HCT116 (cell line): ENCODE measurements at regions of chr11 and their contacts with region 1.

Region 1: GRCh38 chr11:70191495-70192140 is 11.5 kb upstream of the FADD start:
- DNase-seq: peak; percentile 62
- ATAC-seq: peak; percentile 95
- H3K4me3 ChIP-seq: no peak overlapping the region
- H3K27ac ChIP-seq: no peak overlapping the region
- H3K4me1 ChIP-seq: peaks cover 0 to 15% of the 10 kb centered on the region in 2 experiments; a peak in 2 of 4 replicates
- H3K27me3 ChIP-seq: no peaks in the 10 kb centered on the region
- CTCF ChIP-seq: peak; percentile 93 to 98 (median 95)
- POLR2A ChIP-seq: no peak
- RAD21 ChIP-seq: peak; percentile 100

Region 2: GRCh38 chr11:69588270-69588669 is 603.3 kb before region 1 on chr11:
- CTCF ChIA-PET with region 1: no interaction called
- POLR2A ChIA-PET with region 1: no interaction called
- RAD21 ChIA-PET with region 1: no interaction called
- intact Hi-C with region 1: no loop called
- DNase-seq: peak; percentile 54
- ATAC-seq: peak; percentile 96
- H3K4me3 ChIP-seq: no peak overlapping the region
- H3K27ac ChIP-seq: no peak overlapping the region
- H3K4me1 ChIP-seq: peaks cover 0 to 20% of the 10 kb centered on the region in 2 experiments; a peak in 2 of 4 replicates
- H3K27me3 ChIP-seq: no peaks in the 10 kb centered on the region
- CTCF ChIP-seq: peak in 2 of 3 experiments; percentile 60 to 63; a peak in 4 of 6 replicates
- POLR2A ChIP-seq: no peak
- RAD21 ChIP-seq: peak; percentile 42; the same call in 1 of the 2 replicates

Region 3: DNA sequence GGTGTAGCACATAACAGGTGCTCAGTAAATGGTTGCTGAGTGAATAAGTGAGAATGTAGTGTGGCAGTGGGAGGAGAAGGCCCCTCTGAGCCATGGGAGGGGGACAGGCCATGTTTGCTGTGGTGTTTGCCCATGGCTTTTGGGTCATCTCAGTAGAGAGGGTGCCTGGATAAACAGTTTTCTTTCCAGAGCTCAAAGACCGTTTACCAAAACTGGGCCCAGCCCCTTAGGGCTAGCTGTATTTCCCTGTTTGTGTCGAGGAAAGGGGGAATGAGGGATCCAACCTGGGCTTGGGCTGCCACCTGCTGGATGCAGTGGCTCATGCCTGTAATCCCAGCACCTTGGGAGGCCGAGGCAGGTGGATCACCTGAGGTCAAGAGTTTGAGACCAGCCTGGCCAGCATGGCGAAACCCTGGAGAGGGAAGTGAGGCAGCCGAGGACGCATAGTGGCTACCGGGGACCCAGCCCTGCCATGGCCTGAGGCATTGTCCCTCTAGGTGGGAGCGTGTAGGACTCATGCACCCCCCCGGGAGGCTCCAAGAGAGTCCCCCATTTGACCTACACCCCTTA is 507.8 kb before region 1 on chr11:
- CTCF ChIA-PET with region 1: interaction called, 6 read pairs
- POLR2A ChIA-PET with region 1: no interaction called
- RAD21 ChIA-PET with region 1: interaction called in 1 of 2 experiments, 3 read pairs
- intact Hi-C with region 1: loop called (anchors 5 kb)
- DNase-seq: no peak
- ATAC-seq: peak; percentile 78
- H3K4me3 ChIP-seq: no peak overlapping the region
- H3K27ac ChIP-seq: no peak overlapping the region
- H3K4me1 ChIP-seq: peaks cover 11 to 45% of the 10 kb centered on the region in 2 experiments; a peak in 3 of 4 replicates
- H3K27me3 ChIP-seq: no peaks in the 10 kb centered on the region
- CTCF ChIP-seq: peak; percentile 56 to 73 (median 71); a peak in 5 of 6 replicates
- POLR2A ChIP-seq: no peak
- RAD21 ChIP-seq: peak; percentile 92

Region 4: GRCh38 chr11:69718147-69718546 is 473.5 kb before region 1 on chr11:
- CTCF ChIA-PET with region 1: no interaction called
- POLR2A ChIA-PET with region 1: no interaction called
- RAD21 ChIA-PET with region 1: no interaction called
- intact Hi-C with region 1: loop called (anchors 5 kb)
- DNase-seq: no peak
- ATAC-seq: peak; percentile 83
- H3K4me3 ChIP-seq: no peak overlapping the region
- H3K27ac ChIP-seq: no peak overlapping the region
- H3K4me1 ChIP-seq: peaks cover 7 to 19% of the 10 kb centered on the region in 2 experiments; a peak in 3 of 4 replicates
- H3K27me3 ChIP-seq: no peaks in the 10 kb centered on the region
- CTCF ChIP-seq: peak; percentile 72 to 81 (median 78)
- POLR2A ChIP-seq: no peak
- RAD21 ChIP-seq: peak; percentile 73

Region 5: GRCh38 chr11:69909561-69910496 is 281.8 kb before region 1 on chr11:
- CTCF ChIA-PET with region 1: interaction called, 20 read pairs
- POLR2A ChIA-PET with region 1: interaction called, 3 read pairs
- RAD21 ChIA-PET with region 1: interaction called, 6 to 8 read pairs
- intact Hi-C with region 1: loop called (anchors 1 kb)
- DNase-seq: no peak
- ATAC-seq: peak; percentile 47
- H3K4me3 ChIP-seq: no peak overlapping the region
- H3K27ac ChIP-seq: no peak overlapping the region
- H3K4me1 ChIP-seq: peaks cover 19 to 58% of the 10 kb centered on the region in 2 experiments
- H3K27me3 ChIP-seq: no peaks in the 10 kb centered on the region
- CTCF ChIP-seq: peak in 2 of 3 experiments; percentile 78 to 92; a peak in 4 of 6 replicates
- POLR2A ChIP-seq: no peak
- RAD21 ChIP-seq: no peak

Region 6: GRCh38 chr11:69918938-69919650 is 272.5 kb before region 1 on chr11:
- CTCF ChIA-PET with region 1: interaction called, 24 read pairs
- POLR2A ChIA-PET with region 1: interaction called, 3 read pairs
- RAD21 ChIA-PET with region 1: interaction called, 6 to 8 read pairs
- intact Hi-C with region 1: loop called (anchors 1 kb)
- DNase-seq: peak; percentile 43
- ATAC-seq: peak; percentile 72
- H3K4me3 ChIP-seq: 0 out of 4 replicates have a peak overlapping the region, but pooled peaks of 1 of the 2 experiments have one; percentile 8
- H3K27ac ChIP-seq: no peak overlapping the region; the same call in 1 of the 2 replicates
- H3K4me1 ChIP-seq: peaks cover 18 to 39% of the 10 kb centered on the region in 2 experiments
- H3K27me3 ChIP-seq: no peaks in the 10 kb centered on the region
- CTCF ChIP-seq: peak in 2 of 3 experiments; percentile 93 to 94; a peak in 4 of 6 replicates
- POLR2A ChIP-seq: no peak
- RAD21 ChIP-seq: no peak

Region 7: GRCh38 chr11:69943066-69943465 is 248.6 kb before region 1 on chr11:
- CTCF ChIA-PET with region 1: interaction called, 3 read pairs
- POLR2A ChIA-PET with region 1: no interaction called
- RAD21 ChIA-PET with region 1: no interaction called
- intact Hi-C with region 1: loop called (anchors 1 kb)
- DNase-seq: peak; percentile 31
- ATAC-seq: peak; percentile 71
- H3K4me3 ChIP-seq: no peak overlapping the region
- H3K27ac ChIP-seq: no peak overlapping the region; the same call in 1 of the 2 replicates
- H3K4me1 ChIP-seq: peaks cover 23 to 43% of the 10 kb centered on the region in 2 experiments
- H3K27me3 ChIP-seq: no peaks in the 10 kb centered on the region
- CTCF ChIP-seq: peak in 2 of 3 experiments; percentile 49 to 53; a peak in 4 of 6 replicates
- POLR2A ChIP-seq: no peak
- RAD21 ChIP-seq: no peak

Region 8: GRCh38 chr11:70082829-70083228 is 108.8 kb before region 1 on chr11:
- CTCF ChIA-PET with region 1: no interaction called
- POLR2A ChIA-PET with region 1: no interaction called
- RAD21 ChIA-PET with region 1: no interaction called
- intact Hi-C with region 1: loop called (anchors 5 kb)
- DNase-seq: no peak
- ATAC-seq: no peak
- H3K4me3 ChIP-seq: no peak overlapping the region
- H3K27ac ChIP-seq: no peak overlapping the region
- H3K4me1 ChIP-seq: peaks cover 23 to 36% of the 10 kb centered on the region in 2 experiments
- H3K27me3 ChIP-seq: no peaks in the 10 kb centered on the region
- CTCF ChIP-seq: peak; percentile 45 to 57 (median 55); a peak in 5 of 6 replicates
- POLR2A ChIP-seq: no peak
- RAD21 ChIP-seq: peak; percentile 50

Region 9: DNA sequence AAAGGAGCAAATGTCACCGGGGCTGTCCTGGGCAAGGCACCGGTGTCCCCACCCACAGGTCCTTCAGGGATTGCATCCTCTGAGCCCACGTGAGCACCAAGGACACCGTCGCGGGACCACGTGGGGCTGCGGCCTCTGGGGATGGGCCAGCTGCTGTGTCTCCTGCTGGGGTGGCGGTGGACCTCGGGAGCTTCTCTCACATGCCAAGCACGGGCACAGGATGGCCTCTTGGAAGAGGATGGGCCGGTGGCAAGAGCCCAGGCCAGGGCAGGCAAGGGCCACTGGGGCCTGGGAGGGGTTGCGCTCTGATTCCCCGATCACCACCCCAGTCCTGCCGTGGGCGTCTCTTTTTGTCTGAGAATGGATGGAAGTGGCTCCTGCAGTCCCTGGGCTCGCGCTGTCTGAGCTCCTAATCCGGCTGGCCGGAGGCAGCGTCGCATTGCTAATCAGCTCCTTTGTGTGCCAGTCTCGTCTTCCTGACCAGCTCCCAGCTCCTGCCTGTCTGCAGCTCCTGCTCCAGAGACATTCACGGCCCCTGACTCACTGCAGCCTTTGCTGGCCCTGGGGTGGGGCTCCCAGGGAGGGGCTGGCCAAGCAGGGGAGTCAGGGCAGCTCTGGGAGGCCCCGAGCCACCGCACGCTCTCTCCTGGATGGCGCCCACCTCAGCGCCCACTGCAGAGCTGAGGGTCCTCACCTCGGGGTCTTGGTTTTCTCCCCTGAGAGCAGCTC is 353.4 kb after region 1 on chr11:
- CTCF ChIA-PET with region 1: no interaction called
- POLR2A ChIA-PET with region 1: no interaction called
- RAD21 ChIA-PET with region 1: no interaction called
- intact Hi-C with region 1: no loop called
- DNase-seq: no peak
- ATAC-seq: no peak
- H3K4me3 ChIP-seq: no peak overlapping the region
- H3K27ac ChIP-seq: no peak overlapping the region
- H3K4me1 ChIP-seq: no peaks in the 10 kb centered on the region; a peak in 1 of 4 replicates
- H3K27me3 ChIP-seq: no peaks in the 10 kb centered on the region
- CTCF ChIP-seq: no peak
- POLR2A ChIP-seq: no peak
- RAD21 ChIP-seq: no peak